ENCODE measurements at regions of chr3 and their contacts with region 1.

Region 1: DNA sequence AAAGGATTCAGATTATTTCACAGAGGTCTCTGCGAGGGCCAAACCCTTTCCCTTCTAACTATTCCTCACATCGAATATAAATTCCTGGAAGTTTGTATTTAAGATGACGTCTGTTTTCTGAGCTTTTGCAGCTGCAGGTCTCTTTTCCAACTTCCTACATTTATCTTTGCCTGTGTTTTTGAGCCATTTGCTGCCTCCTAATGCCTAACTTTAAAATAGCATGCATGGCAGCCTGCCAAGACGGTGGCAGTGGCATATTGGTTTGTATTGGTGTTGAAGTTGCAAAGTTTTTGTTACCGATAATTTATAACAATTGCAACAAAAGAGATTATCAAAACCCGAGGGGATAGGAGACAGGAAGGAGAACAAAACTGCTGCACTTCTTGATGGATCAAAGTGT is 187.1 kb upstream of the DNAJC19 start:
- DNase-seq: peak; percentile 78
- ATAC-seq: no peak

Region 2: DNA sequence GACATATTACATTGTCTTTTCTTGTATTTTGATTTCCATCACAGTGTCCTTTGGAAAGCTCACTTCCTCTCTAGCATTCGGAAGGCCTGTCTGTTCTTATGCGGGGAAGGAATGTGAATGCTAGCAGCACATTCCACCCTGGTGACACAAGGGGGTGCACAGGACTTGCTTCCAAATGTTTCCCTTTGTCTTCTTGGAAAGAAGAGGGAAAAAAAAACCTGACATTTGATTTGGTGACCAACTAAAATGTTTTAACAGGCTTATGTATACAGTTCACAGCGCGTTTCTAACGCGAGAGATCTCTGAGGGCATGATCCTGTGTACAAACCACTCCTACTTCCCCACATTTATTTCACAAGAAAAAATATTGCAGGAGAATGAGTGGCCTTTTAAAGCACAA is 371.7 kb before region 1 on chr3:
- intact Hi-C with region 1: loop called (anchors 2 kb)
- DNase-seq: no peak
- ATAC-seq: peak; percentile 80

Measured in Right ventricle myocardium superior (tissue), 1 donor.